ENCODE measurements at regions of chr22 and their contacts with region 1.

Region 1: GRCh38 chr22:50674606-50675549 is 2.3 kb downstream of the SHANK3 start:
- DNase-seq: no peak
- H3K4me3 ChIP-seq: peak overlapping the region; percentile 0 to 74 (median 6)
- H3K27ac ChIP-seq: no peak overlapping the region
- H3K4me1 ChIP-seq: peaks cover 38% of the 10 kb centered on the region
- H3K27me3 ChIP-seq: no peaks in the 10 kb centered on the region
- CTCF ChIP-seq: no peak
- POLR2A ChIP-seq: no peak

Region 2: DNA sequence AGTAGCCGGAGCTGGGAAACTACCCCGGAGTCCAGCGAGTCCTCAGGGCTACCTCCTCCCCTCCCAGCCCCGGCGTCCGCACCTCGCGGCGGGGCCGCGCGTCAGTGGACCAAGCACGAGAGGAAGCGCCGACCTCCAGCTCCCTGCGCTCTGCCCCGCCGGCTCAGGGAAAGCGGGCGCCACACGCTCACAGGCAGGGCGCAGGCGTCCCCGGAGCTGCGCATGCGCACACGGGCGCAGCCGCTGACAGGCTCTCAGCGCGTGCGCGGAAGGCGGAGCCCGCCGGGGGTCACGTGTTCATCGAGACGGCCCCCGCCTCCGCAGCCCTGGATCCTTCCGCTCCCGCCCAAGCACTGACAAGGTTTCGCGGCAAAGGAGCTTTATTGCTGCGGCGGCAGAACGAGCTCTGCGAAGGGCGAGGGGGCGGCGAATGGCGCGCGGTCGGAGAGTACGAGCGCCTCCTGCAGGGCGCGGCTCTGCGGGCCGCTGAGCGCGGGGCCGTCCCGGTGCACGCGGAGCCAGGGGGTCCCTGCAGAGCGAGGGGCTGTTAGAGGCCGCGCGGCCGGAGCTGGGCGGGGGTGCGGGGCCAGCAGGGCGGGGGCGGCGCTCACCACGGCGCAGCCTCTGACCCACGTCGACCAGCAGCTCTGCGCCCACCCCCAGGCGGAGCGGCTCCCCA is 149.3 kb before region 1 on chr22 and contains the start of gene SCO2:
- CTCF ChIA-PET with region 1: no interaction called
- POLR2A ChIA-PET with region 1: no interaction called
- dilution Hi-C with region 1: no loop called
- intact Hi-C with region 1: loop called (anchors 1 kb)
- DNase-seq: peak; percentile 98
- H3K4me3 ChIP-seq: peak within 1 kb of the TSS; percentile 47 to 66 (median 48)
- H3K27ac ChIP-seq: peak within 1 kb of the TSS; percentile 57
- H3K4me1 ChIP-seq: peaks cover 16% of the 10 kb centered on the region
- H3K27me3 ChIP-seq: peaks cover 0 to 6% of the 10 kb centered on the region in 2 experiments
- CTCF ChIP-seq: peak; percentile 36 to 70
- POLR2A ChIP-seq: peak; percentile 92
- total RNA-seq, gene SCO2: 3.2 and 3.7 TPM in 2 replicates

Region 3: GRCh38 chr22:50576070-50576469 is 98.8 kb before region 1 on chr22:
- CTCF ChIA-PET with region 1: no interaction called
- POLR2A ChIA-PET with region 1: no interaction called
- dilution Hi-C with region 1: no loop called
- intact Hi-C with region 1: loop called (anchors 5 kb)
- DNase-seq: peak; percentile 68
- H3K4me3 ChIP-seq: no peak overlapping the region
- H3K27ac ChIP-seq: no peak overlapping the region
- H3K4me1 ChIP-seq: no peaks in the 10 kb centered on the region
- H3K27me3 ChIP-seq: no peaks in the 10 kb centered on the region
- CTCF ChIP-seq: peak; percentile 53 to 62
- POLR2A ChIP-seq: no peak

Region 4: GRCh38 chr22:50627642-50628542 is 47.0 kb before region 1 on chr22 and contains the start of gene ARSA:
- CTCF ChIA-PET with region 1: interaction called, 9 read pairs
- POLR2A ChIA-PET with region 1: interaction called, 5 read pairs
- dilution Hi-C with region 1: no loop called
- intact Hi-C with region 1: loop called (anchors 1 kb)
- DNase-seq: peak; percentile 77
- H3K4me3 ChIP-seq: peak within 1 kb of the TSS; percentile 31 to 56 (median 47)
- H3K27ac ChIP-seq: no peak within 1 kb of the TSS
- H3K4me1 ChIP-seq: peaks cover 10% of the 10 kb centered on the region
- H3K27me3 ChIP-seq: no peaks in the 10 kb centered on the region
- CTCF ChIP-seq: peak; percentile 12 to 54
- POLR2A ChIP-seq: peak; percentile 89
- total RNA-seq, gene ARSA: 19.3 and 22.3 TPM in 2 replicates

Region 5: GRCh38 chr22:50641696-50642607 is 32.9 kb before region 1 on chr22:
- CTCF ChIA-PET with region 1: interaction called, 64 read pairs
- POLR2A ChIA-PET with region 1: interaction called, 4 read pairs
- dilution Hi-C with region 1: no loop called
- intact Hi-C with region 1: loop called (anchors 2 kb)
- DNase-seq: peak; percentile 74
- H3K4me3 ChIP-seq: no peak overlapping the region
- H3K27ac ChIP-seq: no peak overlapping the region
- H3K4me1 ChIP-seq: peaks cover 14% of the 10 kb centered on the region
- H3K27me3 ChIP-seq: peaks cover 23 to 24% of the 10 kb centered on the region in 2 experiments
- CTCF ChIP-seq: peak; percentile 47 to 56
- POLR2A ChIP-seq: no peak

Region 6: GRCh38 chr22:50656122-50657070 is 18.5 kb before region 1 on chr22:
- CTCF ChIA-PET with region 1: interaction called, 9 read pairs
- POLR2A ChIA-PET with region 1: no interaction called
- dilution Hi-C with region 1: no loop called
- intact Hi-C with region 1: loop called (anchors 1 kb)
- DNase-seq: peak; percentile 96
- H3K4me3 ChIP-seq: no peak overlapping the region
- H3K27ac ChIP-seq: peak overlapping the region; percentile 86
- H3K4me1 ChIP-seq: peaks cover 29% of the 10 kb centered on the region
- H3K27me3 ChIP-seq: no peaks in the 10 kb centered on the region
- CTCF ChIP-seq: no peak
- POLR2A ChIP-seq: peak; percentile 88

Region 7: GRCh38 chr22:50691521-50691920 is 16.6 kb after region 1 on chr22:
- CTCF ChIA-PET with region 1: no interaction called
- POLR2A ChIA-PET with region 1: no interaction called
- dilution Hi-C with region 1: no loop called
- intact Hi-C with region 1: loop called (anchors 2 kb)
- DNase-seq: peak; percentile 61
- H3K4me3 ChIP-seq: no peak overlapping the region
- H3K27ac ChIP-seq: no peak overlapping the region
- H3K4me1 ChIP-seq: peaks cover 16% of the 10 kb centered on the region
- H3K27me3 ChIP-seq: no peaks in the 10 kb centered on the region
- CTCF ChIP-seq: peak; percentile 44 to 47
- POLR2A ChIP-seq: no peak

Measured in endothelial cell of umbilical vein (primary cell).